ENCODE measurements at regions of chr1 and their contacts with region 1.

Region 1: DNA sequence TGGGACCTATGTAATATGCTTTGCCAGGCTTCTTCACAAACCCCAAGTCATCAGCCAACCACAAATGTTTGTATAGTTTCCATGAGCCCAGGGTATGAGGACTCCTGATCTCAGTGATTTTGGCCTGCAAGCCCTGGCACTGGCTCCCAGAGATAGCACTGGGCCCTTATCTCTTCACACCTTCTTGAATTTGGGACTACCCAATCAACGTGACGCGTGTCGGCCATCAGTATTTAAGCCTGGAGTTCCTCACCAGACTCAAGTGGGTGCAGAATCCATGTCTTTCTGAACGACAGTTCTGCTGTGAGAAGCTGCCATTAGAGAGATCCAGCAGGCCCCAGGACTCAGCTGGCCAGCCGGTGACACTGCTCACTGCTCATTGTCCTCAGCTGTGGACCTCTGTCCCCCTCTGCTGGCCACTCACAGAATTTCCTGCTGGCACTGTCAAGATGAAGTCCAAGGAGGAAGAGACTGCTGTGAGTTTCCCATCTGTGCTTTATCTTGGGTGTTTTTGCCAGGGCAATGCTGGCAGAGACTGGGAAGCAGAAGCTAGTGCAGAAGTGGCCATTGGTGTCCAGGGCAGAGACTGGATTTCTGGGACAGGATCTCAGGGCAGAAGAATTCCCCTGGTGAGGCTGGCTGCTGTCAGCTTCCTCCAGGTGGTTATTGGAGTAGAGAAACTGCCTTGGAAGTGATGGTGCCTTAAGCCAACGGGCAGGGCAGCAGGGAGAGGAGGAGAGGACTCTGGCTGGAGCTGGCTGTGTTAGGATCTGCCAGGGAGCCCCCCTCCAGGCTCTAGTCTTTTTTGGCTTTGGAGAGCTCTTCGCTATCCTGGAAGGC is 28.4 kb downstream of the TMCC2 start:
- DNase-seq: peak; percentile 89
- ATAC-seq: peak; percentile 97
- H3K4me3 Mint-ChIP-seq: no peak overlapping the region
- H3K27ac Mint-ChIP-seq: no peak overlapping the region
- H3K4me1 Mint-ChIP-seq: peaks cover under 1% of the 10 kb centered on the region
- H3K27me3 Mint-ChIP-seq: peaks cover 2% of the 10 kb centered on the region

Region 2: GRCh38 chr1:204935155-204935554 is 321.0 kb before region 1 on chr1:
- CTCF ChIA-PET with region 1: no interaction called
- DNase-seq: no peak
- ATAC-seq: no peak
- H3K4me3 Mint-ChIP-seq: no peak overlapping the region
- H3K27ac Mint-ChIP-seq: no peak overlapping the region
- H3K4me1 Mint-ChIP-seq: no peaks in the 10 kb centered on the region
- H3K27me3 Mint-ChIP-seq: peaks cover 10% of the 10 kb centered on the region

Region 3: GRCh38 chr1:204975570-204976235 is 280.5 kb before region 1 on chr1:
- CTCF ChIA-PET with region 1: interaction called, 12 read pairs
- DNase-seq: peak; percentile 60
- ATAC-seq: peak; percentile 70
- H3K4me3 Mint-ChIP-seq: no peak overlapping the region
- H3K27ac Mint-ChIP-seq: no peak overlapping the region
- H3K4me1 Mint-ChIP-seq: peaks cover 20% of the 10 kb centered on the region
- H3K27me3 Mint-ChIP-seq: peaks cover 38% of the 10 kb centered on the region

Region 4: GRCh38 chr1:205061665-205062069 is 194.5 kb before region 1 on chr1:
- CTCF ChIA-PET with region 1: interaction called, 49 read pairs
- DNase-seq: peak; percentile 81
- ATAC-seq: peak; percentile 61
- H3K4me3 Mint-ChIP-seq: no peak overlapping the region
- H3K27ac Mint-ChIP-seq: no peak overlapping the region
- H3K4me1 Mint-ChIP-seq: no peaks in the 10 kb centered on the region
- H3K27me3 Mint-ChIP-seq: no peaks in the 10 kb centered on the region

Region 5: DNA sequence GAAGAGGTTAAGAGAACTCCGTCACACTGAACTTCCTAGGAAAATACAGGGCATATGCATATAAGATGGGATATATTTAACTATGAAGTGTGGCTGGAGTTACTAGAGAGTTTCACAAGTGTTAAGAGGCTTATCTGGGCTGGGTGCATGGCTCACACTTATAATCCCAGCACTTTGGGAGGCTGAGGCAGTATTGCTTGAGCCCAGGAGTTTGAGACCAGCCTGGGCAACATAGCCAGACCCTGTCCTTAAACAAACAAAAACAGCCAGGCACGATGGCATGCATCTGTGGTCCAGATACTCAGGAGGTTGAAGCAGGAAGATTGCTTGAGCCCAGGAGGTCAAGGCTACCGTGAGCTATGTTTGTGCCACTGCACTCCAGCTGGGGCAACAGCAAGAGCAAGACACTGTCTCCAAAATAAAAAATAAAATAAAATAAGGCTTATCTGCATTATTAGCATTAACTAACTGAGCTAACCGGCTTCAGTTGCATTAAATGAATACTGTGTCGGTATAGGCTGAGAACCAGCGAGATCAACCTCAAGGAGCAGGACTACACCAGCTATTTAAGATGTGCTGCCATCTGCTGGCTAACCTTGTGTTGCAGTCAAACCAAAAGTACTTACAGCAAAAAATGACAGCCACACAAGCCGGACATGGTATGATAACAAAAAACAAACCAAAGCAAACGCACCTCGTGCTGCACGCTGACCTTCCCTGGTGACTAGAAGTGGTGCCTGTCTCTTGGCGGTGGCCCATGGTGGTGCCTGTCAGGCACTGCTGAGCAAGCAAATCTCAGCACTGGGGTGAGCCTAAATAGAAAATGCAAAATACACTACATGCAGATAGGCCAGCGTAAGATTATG is 114.7 kb before region 1 on chr1:
- CTCF ChIA-PET with region 1: interaction called, 31 read pairs
- DNase-seq: peak; percentile 88
- ATAC-seq: peak; percentile 92
- H3K4me3 Mint-ChIP-seq: no peak overlapping the region
- H3K27ac Mint-ChIP-seq: no peak overlapping the region
- H3K4me1 Mint-ChIP-seq: peaks cover 6% of the 10 kb centered on the region
- H3K27me3 Mint-ChIP-seq: no peaks in the 10 kb centered on the region

Region 6: DNA sequence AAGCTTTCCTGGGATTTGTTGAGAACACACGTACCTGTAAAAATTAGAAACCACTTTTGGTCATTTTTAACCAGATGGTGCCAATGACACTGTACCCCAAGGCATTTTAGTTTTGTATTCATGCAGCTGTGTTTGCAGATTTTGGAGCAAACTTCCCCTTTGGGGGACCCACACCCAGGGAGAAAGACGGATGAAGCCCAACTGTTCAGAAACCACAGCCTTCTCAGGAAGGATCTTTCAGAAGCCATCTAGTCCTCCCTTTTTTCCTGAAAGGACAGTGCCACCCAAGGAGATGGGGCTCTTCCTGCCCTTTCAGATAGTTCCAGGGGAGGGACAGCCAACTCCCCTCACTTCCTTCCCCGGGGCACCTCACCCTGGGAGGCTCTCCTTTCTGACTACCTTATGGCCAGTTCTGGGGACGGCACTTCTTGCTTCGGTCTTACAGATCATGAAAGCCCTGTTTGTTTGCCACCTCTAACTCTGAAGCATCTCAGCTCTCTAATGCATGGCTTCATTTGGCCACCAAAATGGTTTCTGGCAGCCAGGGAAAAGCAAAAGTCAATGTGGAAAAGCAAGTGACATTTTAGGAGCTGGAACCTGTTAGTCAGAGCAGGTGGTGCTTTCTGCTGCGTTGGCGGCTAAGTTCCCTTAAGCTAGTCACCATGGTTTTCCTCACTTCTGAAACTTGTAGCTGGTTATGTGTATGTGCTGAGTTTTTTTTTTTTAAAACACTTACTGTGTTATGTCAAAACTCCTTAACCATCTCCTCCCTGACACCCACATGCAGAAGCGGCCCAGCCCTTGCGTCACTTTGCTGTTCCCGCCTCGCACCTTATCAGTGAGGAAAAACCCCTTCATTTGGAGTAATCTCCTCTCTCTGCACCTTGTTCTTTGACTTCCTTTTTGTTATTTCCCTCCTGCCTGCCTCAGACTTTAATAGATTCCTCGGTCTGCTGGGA is 18.4 kb before region 1 on chr1:
- CTCF ChIA-PET with region 1: interaction called, 207 read pairs
- DNase-seq: peak; percentile 39
- ATAC-seq: no peak
- H3K4me3 Mint-ChIP-seq: no peak overlapping the region
- H3K27ac Mint-ChIP-seq: no peak overlapping the region
- H3K4me1 Mint-ChIP-seq: peaks cover 11% of the 10 kb centered on the region
- H3K27me3 Mint-ChIP-seq: peaks cover 21% of the 10 kb centered on the region

Region 7: GRCh38 chr1:205321164-205321958 is 65.2 kb after region 1 on chr1 and contains the start of gene NUAK2:
- CTCF ChIA-PET with region 1: interaction called, 22 read pairs
- DNase-seq: peak; percentile 83
- ATAC-seq: peak; percentile 91
- H3K4me3 Mint-ChIP-seq: peak within 1 kb of the TSS; percentile 88
- H3K27ac Mint-ChIP-seq: peak within 1 kb of the TSS; percentile 68
- H3K4me1 Mint-ChIP-seq: peaks cover 48% of the 10 kb centered on the region
- H3K27me3 Mint-ChIP-seq: peaks cover 19% of the 10 kb centered on the region
- total RNA-seq, gene NUAK2: 1.9 to 6.0 TPM

Measured in activated CD8-positive, alpha-beta memory T cell treated with anti-CD3 and anti-CD28 coated beads, Interleukin-2, amount 10 ng/mL, durations not matched to agents 7 days and 5 days (primary cell).